Natural killer cell (primary cell): ENCODE measurements at regions of chr4 and their contacts with region 1.

Region 1: GRCh38 chr4:54322818-54323417 is 93.8 kb downstream of the PDGFRA start:
- DNase-seq: peak in 1 of 2 donors; percentile 64
- ATAC-seq: peak in 2 of 3 donors; percentile 52 to 53
- H3K4me3 ChIP-seq: no peak overlapping the region
- H3K4me3 Mint-ChIP-seq: no peak overlapping the region
- H3K27ac ChIP-seq: no peak overlapping the region
- H3K27ac Mint-ChIP-seq: no peak overlapping the region
- H3K4me1 ChIP-seq: no peaks in the 10 kb centered on the region
- H3K4me1 Mint-ChIP-seq: no peaks in the 10 kb centered on the region
- H3K27me3 ChIP-seq: no peaks in the 10 kb centered on the region
- H3K27me3 Mint-ChIP-seq: peaks cover 0 to 4% of the 10 kb centered on the region in 2 donors
- CTCF ChIP-seq: peak; percentile 56

Region 2: DNA sequence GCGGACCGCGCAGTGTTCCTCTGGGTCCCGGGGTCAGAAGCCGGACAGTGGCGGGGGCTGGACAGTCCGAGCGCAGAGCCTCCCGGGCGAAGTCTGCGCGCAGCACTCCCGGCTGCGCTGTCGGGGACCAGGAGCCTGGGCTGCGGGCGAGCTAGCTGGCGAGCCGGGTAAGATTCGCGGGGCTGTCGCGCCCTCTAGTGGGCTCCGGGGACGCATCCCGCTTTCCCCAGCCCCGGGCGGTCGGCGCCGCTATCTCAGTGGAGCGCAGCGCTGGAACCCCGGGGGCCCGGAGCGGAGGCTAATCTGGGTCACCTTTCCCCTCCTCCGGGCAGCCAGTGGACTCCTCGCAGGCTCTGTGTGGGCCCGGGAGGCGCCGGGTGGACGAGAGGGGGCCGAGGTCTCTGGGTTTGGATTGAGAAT is 89.6 kb before region 1 on chr4:
- intact Hi-C with region 1: no loop called
- DNase-seq: peak; percentile 64 to 82
- ATAC-seq: peak; percentile 83 to 85 (median 84)
- H3K4me3 ChIP-seq: peak overlapping the region; percentile 15
- H3K4me3 Mint-ChIP-seq: peak overlapping the region; percentile 82
- H3K27ac ChIP-seq: no peak overlapping the region
- H3K27ac Mint-ChIP-seq: no peak overlapping the region
- H3K4me1 ChIP-seq: peaks cover 32% of the 10 kb centered on the region
- H3K4me1 Mint-ChIP-seq: peaks cover 11 to 20% of the 10 kb centered on the region in 2 donors
- H3K27me3 ChIP-seq: peaks cover 33% of the 10 kb centered on the region
- H3K27me3 Mint-ChIP-seq: peaks cover 46% of the 10 kb centered on the region in 2 donors
- CTCF ChIP-seq: peak; percentile 62

Region 3: DNA sequence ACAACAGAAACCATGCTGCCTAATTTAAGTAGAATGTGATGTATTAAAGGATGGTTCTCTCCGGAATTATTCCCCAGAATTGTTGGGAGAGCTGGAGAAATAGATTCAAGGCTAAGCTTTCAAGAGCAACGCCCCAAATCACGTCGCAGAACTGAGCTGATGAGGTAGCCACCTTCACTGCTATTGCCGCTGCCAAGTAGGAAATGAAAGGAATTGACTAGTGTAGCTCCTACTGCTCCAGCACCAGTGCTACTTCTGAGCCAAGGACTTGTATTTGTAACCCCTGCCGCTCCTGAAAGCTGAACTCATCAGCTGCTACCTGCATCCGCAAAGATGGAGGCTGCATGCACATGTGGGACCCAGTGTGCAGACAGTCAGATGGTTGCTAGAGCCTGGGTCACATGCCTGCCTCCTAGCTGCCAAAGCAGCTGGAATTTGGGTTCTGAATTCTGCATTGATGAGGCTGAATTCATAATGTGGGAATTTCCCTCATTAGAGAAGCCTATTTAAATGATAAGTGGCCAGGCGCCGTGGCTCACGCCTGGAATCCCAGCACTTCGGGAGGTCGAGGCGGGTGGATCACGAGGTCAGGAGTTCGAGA is 80.1 kb after region 1 on chr4:
- intact Hi-C with region 1: no loop called
- DNase-seq: no peak
- ATAC-seq: no peak
- H3K4me3 ChIP-seq: no peak overlapping the region
- H3K4me3 Mint-ChIP-seq: no peak overlapping the region
- H3K27ac ChIP-seq: no peak overlapping the region
- H3K27ac Mint-ChIP-seq: no peak overlapping the region
- H3K4me1 ChIP-seq: no peaks in the 10 kb centered on the region
- H3K4me1 Mint-ChIP-seq: no peaks in the 10 kb centered on the region
- H3K27me3 ChIP-seq: no peaks in the 10 kb centered on the region
- H3K27me3 Mint-ChIP-seq: no peaks in the 10 kb centered on the region
- CTCF ChIP-seq: no peak

Region 4: GRCh38 chr4:54440394-54441136 is 117.6 kb after region 1 on chr4:
- intact Hi-C with region 1: loop called (anchors 1 kb)
- DNase-seq: peak in 1 of 2 donors; percentile 7
- ATAC-seq: peak in 2 of 3 donors; percentile 9 to 41
- H3K4me3 ChIP-seq: peak overlapping the region; percentile 20
- H3K4me3 Mint-ChIP-seq: peak overlapping the region; percentile 85
- H3K27ac ChIP-seq: no peak overlapping the region
- H3K27ac Mint-ChIP-seq: peak overlapping the region; percentile 38 to 64
- H3K4me1 ChIP-seq: peaks cover 3% of the 10 kb centered on the region
- H3K4me1 Mint-ChIP-seq: peaks cover 12 to 15% of the 10 kb centered on the region in 2 donors
- H3K27me3 ChIP-seq: no peaks in the 10 kb centered on the region
- H3K27me3 Mint-ChIP-seq: peaks cover 0 to 4% of the 10 kb centered on the region in 2 donors
- CTCF ChIP-seq: peak; percentile 45

Region 5: GRCh38 chr4:54840992-54841768 is 518.3 kb after region 1 on chr4:
- intact Hi-C with region 1: loop called (anchors 2 kb)
- DNase-seq: peak in 1 of 2 donors; percentile 4
- ATAC-seq: peak in 1 of 3 donors; percentile 32
- H3K4me3 ChIP-seq: no peak overlapping the region
- H3K4me3 Mint-ChIP-seq: no peak overlapping the region
- H3K27ac ChIP-seq: no peak overlapping the region
- H3K27ac Mint-ChIP-seq: no peak overlapping the region
- H3K4me1 ChIP-seq: peaks cover 18% of the 10 kb centered on the region
- H3K4me1 Mint-ChIP-seq: peaks cover 10 to 13% of the 10 kb centered on the region in 2 donors
- H3K27me3 ChIP-seq: no peaks in the 10 kb centered on the region
- H3K27me3 Mint-ChIP-seq: no peaks in the 10 kb centered on the region
- CTCF ChIP-seq: no peak

Region 6: DNA sequence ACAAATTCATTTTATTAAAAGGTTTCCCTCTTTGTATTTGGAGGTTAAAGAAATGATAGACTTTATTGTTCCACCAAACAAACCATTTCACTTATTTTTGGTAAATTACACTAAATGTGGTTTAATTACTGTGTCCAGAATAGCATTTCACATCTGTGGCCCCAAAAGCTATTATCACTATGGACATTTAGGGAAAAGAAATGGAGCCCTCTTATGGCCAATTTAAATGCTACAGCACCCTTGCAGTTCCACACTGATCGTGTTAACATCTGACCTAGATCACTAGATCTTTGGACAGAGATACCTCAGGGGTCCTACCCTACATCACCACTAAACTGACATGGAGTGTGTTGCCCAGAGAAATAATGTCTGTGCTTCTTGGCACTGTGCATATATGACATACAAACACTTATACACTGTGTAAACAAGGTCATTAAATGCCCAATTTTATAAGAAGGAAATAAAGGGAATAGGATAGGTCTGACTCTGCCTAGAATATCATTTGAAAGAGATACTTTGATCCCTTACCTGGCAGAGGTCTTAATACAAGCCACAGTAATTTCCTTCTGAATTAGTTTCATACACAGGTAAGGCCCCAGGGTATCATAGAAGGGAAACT is 638.5 kb after region 1 on chr4:
- intact Hi-C with region 1: loop called (anchors 1 kb)
- DNase-seq: peak in 1 of 2 donors; percentile 53
- ATAC-seq: peak; percentile 40 to 60 (median 52)
- H3K4me3 ChIP-seq: no peak overlapping the region
- H3K4me3 Mint-ChIP-seq: no peak overlapping the region
- H3K27ac ChIP-seq: no peak overlapping the region
- H3K27ac Mint-ChIP-seq: peak overlapping the region in 1 of 2 donors; percentile 33
- H3K4me1 ChIP-seq: peaks cover 11% of the 10 kb centered on the region
- H3K4me1 Mint-ChIP-seq: peaks cover 26 to 35% of the 10 kb centered on the region in 2 donors
- H3K27me3 ChIP-seq: no peaks in the 10 kb centered on the region
- H3K27me3 Mint-ChIP-seq: no peaks in the 10 kb centered on the region
- CTCF ChIP-seq: peak; percentile 68